ENCODE measurements at regions of chr6 and their contacts with region 1.

Region 1: DNA sequence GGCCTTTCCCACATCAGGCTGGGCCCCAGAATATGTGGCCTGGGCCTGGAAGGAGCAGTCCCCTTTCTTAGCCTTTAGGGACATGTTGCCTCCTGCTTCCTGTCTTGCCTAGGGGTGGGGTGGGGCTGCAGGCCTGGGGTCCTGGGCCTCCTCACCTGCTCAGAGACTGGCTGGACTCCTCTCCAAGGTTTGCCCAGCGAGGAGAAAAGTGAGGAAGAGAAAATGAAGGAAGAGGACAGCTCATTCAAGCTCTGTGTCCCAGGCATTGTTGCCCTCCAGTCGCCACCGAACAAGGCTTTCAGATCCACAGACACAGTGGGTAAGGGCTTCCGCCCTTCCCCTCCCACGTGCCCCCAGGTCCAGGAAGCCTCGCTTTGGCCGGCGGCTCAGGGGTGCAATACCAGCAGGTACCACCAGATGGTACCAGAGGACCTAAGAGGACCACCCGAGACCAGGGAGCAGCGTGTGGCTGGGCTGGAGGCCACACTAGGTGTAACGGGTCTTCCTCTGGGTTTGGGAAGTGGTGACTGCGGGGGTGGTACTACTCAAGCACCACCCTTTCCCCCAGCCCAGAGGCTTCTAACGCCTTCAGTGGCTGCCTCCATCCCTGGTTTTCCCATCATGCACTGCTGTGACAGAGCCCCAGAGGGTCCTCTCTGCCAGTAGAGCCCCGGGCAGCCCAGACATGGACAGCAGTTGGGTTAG is 5.5 kb upstream of the BAK1 start:
- DNase-seq: peak; percentile 55
- ATAC-seq: peak; percentile 84
- H3K4me3 ChIP-seq: peak overlapping the region; percentile 3; the same call in 1 of the 2 replicates
- H3K27ac ChIP-seq: no peak overlapping the region
- H3K4me1 ChIP-seq: peaks cover 9% of the 10 kb centered on the region
- H3K27me3 ChIP-seq: no peaks in the 10 kb centered on the region
- CTCF ChIP-seq: peak; percentile 92
- POLR2A ChIP-seq: no peak
- RAD21 ChIP-seq: peak; percentile 92

Region 2: GRCh38 chr6:33454009-33454946 is 131.3 kb before region 1 on chr6 and contains the start of gene ZBTB9:
- CTCF ChIA-PET with region 1: no interaction called
- POLR2A ChIA-PET with region 1: no interaction called
- dilution Hi-C with region 1: no loop called
- in situ Hi-C with region 1: no loop called
- intact Hi-C with region 1: no loop called
- DNase-seq: peak; percentile 96
- ATAC-seq: peak; percentile 99
- H3K4me3 ChIP-seq: peak within 1 kb of the TSS; percentile 73
- H3K27ac ChIP-seq: peak within 1 kb of the TSS; percentile 72
- H3K4me1 ChIP-seq: peaks cover 4% of the 10 kb centered on the region
- H3K27me3 ChIP-seq: no peaks in the 10 kb centered on the region
- CTCF ChIP-seq: no peak
- POLR2A ChIP-seq: peak; percentile 89
- RAD21 ChIP-seq: no peak
- total RNA-seq, gene ZBTB9: 5.4 and 5.6 TPM in 2 replicates

Region 3: GRCh38 chr6:33547499-33547898 is 38.1 kb before region 1 on chr6:
- CTCF ChIA-PET with region 1: no interaction called
- POLR2A ChIA-PET with region 1: no interaction called
- dilution Hi-C with region 1: no loop called
- in situ Hi-C with region 1: no loop called
- intact Hi-C with region 1: no loop called
- DNase-seq: no peak
- ATAC-seq: no peak
- H3K4me3 ChIP-seq: no peak overlapping the region
- H3K27ac ChIP-seq: no peak overlapping the region
- H3K4me1 ChIP-seq: no peaks in the 10 kb centered on the region
- H3K27me3 ChIP-seq: peaks cover 14% of the 10 kb centered on the region
- CTCF ChIP-seq: no peak
- POLR2A ChIP-seq: no peak
- RAD21 ChIP-seq: no peak

Region 4: GRCh38 chr6:33621711-33622388 is 36.3 kb after region 1 on chr6:
- CTCF ChIA-PET with region 1: interaction called, 4 read pairs
- POLR2A ChIA-PET with region 1: no interaction called
- dilution Hi-C with region 1: no loop called
- in situ Hi-C with region 1: no loop called
- intact Hi-C with region 1: loop called (anchors 1 kb)
- DNase-seq: no peak
- ATAC-seq: no peak
- H3K4me3 ChIP-seq: peak overlapping the region; percentile 83
- H3K27ac ChIP-seq: no peak overlapping the region
- H3K4me1 ChIP-seq: peaks cover 4% of the 10 kb centered on the region; the same call in 1 of the 2 replicates
- H3K27me3 ChIP-seq: no peaks in the 10 kb centered on the region; the same call in 1 of the 2 replicates
- CTCF ChIP-seq: no peak
- POLR2A ChIP-seq: no peak
- RAD21 ChIP-seq: no peak

Region 5: DNA sequence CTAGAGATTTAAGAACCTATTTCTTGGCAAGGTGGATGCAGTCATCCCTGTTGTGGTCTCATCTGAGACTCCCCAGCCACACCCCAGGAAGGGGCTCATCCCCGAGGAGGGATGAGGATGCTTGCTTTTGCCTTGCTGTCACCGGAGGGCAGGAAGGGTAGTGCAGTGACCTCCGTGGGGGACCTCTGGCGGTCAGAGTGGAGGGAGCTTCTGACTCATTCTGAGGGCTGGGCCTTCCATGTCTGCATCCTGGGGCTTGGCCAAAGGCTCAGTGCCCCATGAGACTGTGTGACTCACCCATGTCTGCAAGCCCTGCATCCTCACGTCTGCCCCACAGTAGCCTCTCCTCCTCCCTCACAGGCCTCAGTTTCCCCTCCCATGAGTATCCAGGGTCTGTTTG is 87.3 kb after region 1 on chr6:
- CTCF ChIA-PET with region 1: interaction called, 6 read pairs
- POLR2A ChIA-PET with region 1: no interaction called
- dilution Hi-C with region 1: no loop called
- in situ Hi-C with region 1: no loop called
- intact Hi-C with region 1: loop called (anchors 1 kb)
- DNase-seq: peak; percentile 95
- ATAC-seq: peak; percentile 95
- H3K4me3 ChIP-seq: no peak overlapping the region
- H3K27ac ChIP-seq: no peak overlapping the region
- H3K4me1 ChIP-seq: peaks cover 21% of the 10 kb centered on the region
- H3K27me3 ChIP-seq: no peaks in the 10 kb centered on the region
- CTCF ChIP-seq: peak; percentile 63
- POLR2A ChIP-seq: no peak
- RAD21 ChIP-seq: peak; percentile 54

Region 6: DNA sequence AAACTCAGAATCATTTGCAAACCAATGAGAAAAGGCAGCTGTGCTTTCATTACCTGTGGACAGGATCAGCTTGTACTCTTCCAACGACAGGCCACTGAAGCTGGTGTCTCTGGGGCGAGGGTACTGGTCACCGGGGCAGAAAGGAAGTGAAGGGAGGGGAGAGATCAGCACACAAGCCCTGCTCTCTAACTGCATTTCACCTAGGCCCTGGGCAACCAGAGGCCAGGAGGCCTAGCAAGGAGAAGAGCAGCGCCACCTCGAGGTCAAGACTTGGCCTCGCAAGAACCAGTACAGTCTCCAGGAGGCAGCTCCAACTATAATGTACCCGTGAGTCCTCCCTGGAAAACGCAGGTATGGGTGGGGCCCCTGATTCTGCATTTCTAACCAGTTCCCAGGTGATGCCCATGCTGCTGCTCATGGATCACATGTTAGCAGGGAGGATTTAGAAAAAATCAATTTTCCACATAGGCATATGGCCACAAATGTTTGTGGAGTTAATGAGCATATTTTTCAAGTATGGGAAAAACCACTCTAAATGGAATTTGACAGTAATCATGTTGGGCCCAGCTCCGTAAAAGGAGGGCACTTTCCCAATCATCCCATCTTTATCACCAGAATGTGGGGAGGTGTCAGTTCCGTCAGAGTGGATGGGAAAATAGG is 115.0 kb after region 1 on chr6:
- CTCF ChIA-PET with region 1: interaction called, 21 read pairs
- POLR2A ChIA-PET with region 1: no interaction called
- dilution Hi-C with region 1: no loop called
- in situ Hi-C with region 1: loop called (anchors 5 kb)
- intact Hi-C with region 1: loop called (anchors 1 kb)
- DNase-seq: peak; percentile 70
- ATAC-seq: peak; percentile 80
- H3K4me3 ChIP-seq: no peak overlapping the region
- H3K27ac ChIP-seq: no peak overlapping the region
- H3K4me1 ChIP-seq: peaks cover 11% of the 10 kb centered on the region
- H3K27me3 ChIP-seq: no peaks in the 10 kb centered on the region
- CTCF ChIP-seq: peak; percentile 75
- POLR2A ChIP-seq: no peak
- RAD21 ChIP-seq: peak; percentile 80

Region 7: DNA sequence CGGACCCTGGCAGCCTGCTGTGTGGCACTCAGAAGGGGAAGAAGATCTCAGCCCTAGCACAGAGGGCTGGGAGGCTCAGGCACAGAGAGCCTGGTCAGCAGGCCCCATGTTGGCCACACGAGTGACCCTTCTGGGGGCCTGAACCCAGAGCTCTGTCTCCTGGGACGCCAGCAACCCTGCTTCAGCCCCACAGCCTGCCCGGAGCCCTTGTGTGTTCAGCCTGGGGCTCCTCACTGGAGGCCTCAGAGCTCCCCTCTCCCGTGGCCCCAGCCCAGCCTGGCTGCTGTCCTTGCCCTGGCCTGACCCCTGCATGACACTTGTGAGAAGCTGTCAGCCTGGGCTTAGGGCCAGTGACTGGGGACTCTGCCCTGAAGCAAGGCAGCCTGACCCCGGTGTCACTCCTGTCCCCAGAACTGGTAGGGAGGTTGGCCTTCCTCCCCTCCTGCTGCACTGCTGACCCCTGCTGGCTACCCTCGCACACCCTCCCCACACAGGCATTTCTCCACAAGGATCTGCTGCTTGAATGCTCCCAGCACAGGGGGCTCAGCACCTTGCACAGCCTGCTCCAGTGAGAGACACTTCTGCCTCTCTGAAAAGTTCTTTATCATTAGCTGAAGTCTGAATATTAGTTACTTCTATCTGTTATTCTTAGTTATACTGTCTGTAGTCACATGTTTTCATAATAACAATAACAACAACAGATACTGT is 176.5 kb after region 1 on chr6:
- CTCF ChIA-PET with region 1: no interaction called
- POLR2A ChIA-PET with region 1: no interaction called
- dilution Hi-C with region 1: no loop called
- in situ Hi-C with region 1: loop called (anchors 10 kb)
- intact Hi-C with region 1: loop called (anchors 5 kb)
- DNase-seq: peak; percentile 32
- ATAC-seq: peak; percentile 80
- H3K4me3 ChIP-seq: no peak overlapping the region
- H3K27ac ChIP-seq: no peak overlapping the region
- H3K4me1 ChIP-seq: peaks cover 17% of the 10 kb centered on the region; the same call in 1 of the 2 replicates
- H3K27me3 ChIP-seq: no peaks in the 10 kb centered on the region
- CTCF ChIP-seq: peak; percentile 66
- POLR2A ChIP-seq: no peak
- RAD21 ChIP-seq: peak; percentile 70

Region 8: DNA sequence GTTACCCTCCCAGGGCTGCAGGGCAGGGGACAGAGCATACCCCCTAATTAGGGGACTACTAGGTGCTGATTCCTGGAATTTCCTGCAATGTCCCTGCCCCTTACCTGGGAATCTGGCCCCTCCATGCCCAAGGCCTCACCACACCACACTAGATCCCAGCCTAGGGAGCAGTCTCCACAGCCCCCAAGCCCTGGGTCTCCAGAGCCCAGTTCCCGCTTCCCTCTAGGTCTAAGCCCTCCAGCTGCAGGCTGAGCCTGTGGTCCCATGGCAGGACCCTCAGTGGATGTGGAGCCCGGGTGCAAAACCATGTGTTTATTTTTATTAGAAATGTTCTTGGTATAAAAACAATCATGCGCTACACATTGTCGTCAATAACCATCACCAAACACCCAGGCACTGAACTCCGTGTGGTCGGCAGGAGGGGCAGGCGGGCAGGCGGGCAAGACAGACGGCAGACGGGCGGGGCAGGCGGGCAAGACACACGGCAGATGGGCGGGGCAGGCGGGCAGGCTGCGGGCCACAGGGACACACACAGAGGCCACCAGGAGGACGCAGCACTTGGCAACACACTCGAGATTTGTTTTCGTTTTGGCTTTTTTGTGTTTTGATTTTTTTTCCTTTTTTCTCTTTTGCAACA is 436.1 kb after region 1 on chr6:
- CTCF ChIA-PET with region 1: no interaction called
- POLR2A ChIA-PET with region 1: no interaction called
- dilution Hi-C with region 1: no loop called
- in situ Hi-C with region 1: no loop called
- intact Hi-C with region 1: loop called (anchors 5 kb)
- DNase-seq: no peak
- ATAC-seq: no peak
- H3K4me3 ChIP-seq: no peak overlapping the region
- H3K27ac ChIP-seq: no peak overlapping the region
- H3K4me1 ChIP-seq: no peaks in the 10 kb centered on the region
- H3K27me3 ChIP-seq: peaks cover 54% of the 10 kb centered on the region
- CTCF ChIP-seq: no peak
- POLR2A ChIP-seq: no peak
- RAD21 ChIP-seq: no peak

Region 9: GRCh38 chr6:34154668-34155447 is 569.3 kb after region 1 on chr6:
- CTCF ChIA-PET with region 1: no interaction called
- POLR2A ChIA-PET with region 1: no interaction called
- dilution Hi-C with region 1: no loop called
- in situ Hi-C with region 1: loop called (anchors 10 kb)
- intact Hi-C with region 1: loop called (anchors 2 kb)
- DNase-seq: peak; percentile 26
- ATAC-seq: peak; percentile 97
- H3K4me3 ChIP-seq: no peak overlapping the region
- H3K27ac ChIP-seq: no peak overlapping the region
- H3K4me1 ChIP-seq: no peaks in the 10 kb centered on the region
- H3K27me3 ChIP-seq: peaks cover 61% of the 10 kb centered on the region
- CTCF ChIP-seq: peak; percentile 96
- POLR2A ChIP-seq: 0 out of 2 replicates have a peak, but pooled peaks have one; percentile 47
- RAD21 ChIP-seq: peak; percentile 97

Measured in IMR-90 (cell line).